ENCODE measurements at regions of chr15 and their contacts with region 1.

Region 1: DNA sequence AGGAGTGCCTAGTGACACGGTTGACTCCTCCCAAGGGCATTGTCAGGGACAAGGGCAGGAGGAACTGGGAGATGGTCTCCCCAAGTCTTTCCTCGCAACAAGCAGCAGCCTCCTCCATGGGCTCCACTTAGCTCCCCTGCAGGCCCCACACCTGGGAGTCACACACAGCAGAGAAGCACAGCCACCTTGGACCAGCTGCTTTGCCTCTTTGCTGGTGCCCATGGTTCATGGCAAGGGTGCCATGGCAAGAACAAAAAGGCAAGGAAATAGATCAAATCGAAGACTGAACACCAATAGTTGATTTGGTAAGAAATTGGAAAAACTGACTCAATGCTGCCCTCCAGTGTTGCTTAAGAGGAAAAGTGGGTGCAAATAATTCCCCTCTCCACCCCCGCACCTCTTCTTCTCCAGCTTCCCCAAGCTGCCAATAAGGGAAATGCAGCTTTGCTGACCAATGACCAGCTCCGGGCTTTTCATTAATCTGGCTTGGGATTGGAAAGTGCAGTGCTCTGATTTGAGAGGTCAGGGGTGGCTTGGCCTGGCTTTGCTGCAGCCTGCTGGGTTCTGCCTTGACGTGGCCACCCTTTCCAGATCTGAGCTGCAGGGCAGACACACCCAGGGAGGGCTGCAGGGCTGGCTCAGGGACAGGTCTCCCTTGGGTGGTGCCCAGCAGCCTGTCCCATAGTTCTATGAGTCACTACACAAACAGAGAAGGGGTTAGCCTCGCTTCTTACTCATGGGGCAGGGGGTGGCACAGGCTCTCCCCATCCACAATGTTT is 162.0 kb downstream of the KLF13 start:
- H3K4me3 ChIP-seq: no peak overlapping the region
- H3K27ac ChIP-seq: no peak overlapping the region
- H3K4me1 ChIP-seq: no peaks in the 10 kb centered on the region
- CTCF ChIP-seq: peak; percentile 35; the same call in 1 of the 2 replicates

Region 2: DNA sequence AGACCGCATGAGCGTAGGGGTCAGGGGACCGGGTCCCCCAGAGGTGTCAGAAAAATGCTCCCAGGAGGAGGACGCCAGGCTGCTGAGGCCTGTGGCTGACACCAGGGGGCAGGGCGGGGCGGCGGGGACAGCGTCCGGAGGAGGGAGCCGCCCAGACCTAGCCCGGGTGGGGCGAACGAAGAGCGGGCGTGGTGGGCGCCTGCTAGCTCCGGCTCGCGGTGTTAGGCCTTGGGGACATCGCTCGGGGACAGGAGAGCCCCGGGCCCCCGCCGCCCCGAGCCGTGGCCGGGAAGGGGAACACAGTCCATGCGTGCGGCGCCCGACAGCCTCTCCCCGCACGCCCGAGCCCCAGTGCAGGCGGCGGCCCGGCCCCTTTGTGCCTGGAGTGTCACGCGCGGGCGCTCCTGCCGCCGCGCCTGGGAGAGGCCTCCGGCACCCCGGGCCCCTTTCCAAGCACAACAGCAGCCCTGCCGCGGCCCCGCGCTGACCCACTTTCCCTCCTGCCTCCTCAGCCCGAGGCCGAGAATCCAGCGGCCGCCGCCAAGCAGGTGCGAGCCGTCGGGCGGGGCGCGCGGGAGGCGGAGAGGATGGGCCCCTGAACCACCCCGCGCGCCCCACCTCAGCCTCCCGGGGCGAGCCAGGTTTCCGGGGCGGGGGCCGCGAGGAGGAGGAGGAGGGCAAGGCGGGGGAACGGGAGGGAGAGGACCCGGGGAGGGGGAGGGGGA is 273.0 kb before region 1 on chr15:
- CTCF ChIA-PET with region 1: interaction called, 13 read pairs
- POLR2A ChIA-PET with region 1: no interaction called
- H3K4me3 ChIP-seq: peak overlapping the region; percentile 38
- H3K27ac ChIP-seq: peak overlapping the region; percentile 78
- H3K4me1 ChIP-seq: no peaks in the 10 kb centered on the region
- CTCF ChIP-seq: peak; percentile 84

Region 3: DNA sequence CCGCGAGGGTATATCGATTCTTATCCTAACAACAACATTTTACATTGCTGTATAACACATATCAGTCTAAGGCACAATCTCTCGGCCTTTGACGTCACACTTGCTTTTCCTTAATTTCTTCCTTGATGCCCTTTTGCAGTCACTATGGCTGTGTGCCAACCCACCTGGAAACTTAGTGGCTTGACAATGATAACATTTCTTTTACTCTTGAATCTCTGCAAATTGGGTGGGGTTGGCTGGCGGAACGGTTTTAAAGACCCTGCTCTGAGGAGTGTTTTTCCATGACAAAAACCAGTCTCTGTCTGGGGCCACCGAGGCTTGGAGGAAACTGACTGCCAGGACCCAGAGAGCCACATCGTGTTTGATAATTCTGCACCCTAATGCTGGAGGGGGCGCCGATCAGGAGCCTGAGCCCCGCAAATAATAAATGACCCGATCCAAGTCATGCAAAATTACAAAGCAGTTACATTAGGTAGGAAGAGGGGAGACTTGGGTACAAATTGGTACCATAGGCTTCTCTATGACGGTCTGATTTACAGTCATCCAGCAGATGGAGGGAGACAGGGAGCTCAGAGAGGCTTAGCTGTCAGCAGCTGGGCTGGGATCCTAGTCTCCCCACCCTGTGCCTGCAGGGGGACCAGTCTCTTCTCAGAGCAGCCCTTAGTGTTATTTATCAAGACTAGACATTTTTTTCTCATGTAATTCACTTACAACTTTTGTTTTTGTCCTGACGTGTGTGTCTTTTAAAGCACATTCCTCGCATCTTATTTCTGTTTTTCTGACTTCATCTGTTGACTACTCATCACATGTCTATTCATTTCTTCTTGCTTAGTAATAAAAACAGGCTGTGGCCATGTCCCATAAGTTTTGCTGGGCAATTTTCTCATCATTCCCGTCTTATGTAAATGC is 46.2 kb before region 1 on chr15:
- CTCF ChIA-PET with region 1: interaction called, 26 read pairs
- POLR2A ChIA-PET with region 1: no interaction called
- H3K4me3 ChIP-seq: no peak overlapping the region
- H3K27ac ChIP-seq: no peak overlapping the region
- H3K4me1 ChIP-seq: no peaks in the 10 kb centered on the region
- CTCF ChIP-seq: no peak

Region 4: GRCh38 chr15:31476236-31476810 is 12.3 kb before region 1 on chr15:
- CTCF ChIA-PET with region 1: interaction called, 11 read pairs
- POLR2A ChIA-PET with region 1: no interaction called
- H3K4me3 ChIP-seq: no peak overlapping the region
- H3K27ac ChIP-seq: no peak overlapping the region
- H3K4me1 ChIP-seq: no peaks in the 10 kb centered on the region
- CTCF ChIP-seq: no peak